PC-9 (cell line): ENCODE measurements at regions of chr10 and their contacts with region 1.

Region 1: DNA sequence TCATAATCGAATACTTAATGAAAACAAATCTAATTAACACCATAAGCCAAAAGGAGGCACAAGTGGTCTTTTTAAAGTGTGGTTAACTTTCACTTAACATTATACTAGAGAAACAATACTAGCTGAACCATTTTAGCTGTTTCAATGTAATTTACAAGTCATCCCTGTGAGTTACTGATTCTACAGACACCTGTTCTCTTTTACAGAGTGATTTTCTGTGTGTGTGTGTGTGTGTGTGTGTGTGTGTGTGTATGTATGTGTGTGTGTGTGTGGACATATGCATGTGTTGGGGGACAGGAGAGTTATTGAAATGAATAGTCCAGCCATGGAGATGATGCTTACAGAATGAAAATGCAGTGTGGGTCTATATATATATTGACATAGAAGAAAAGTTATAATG is 200.2 kb downstream of the DNAJC1 start:
- DNase-seq: no peak
- H3K4me3 ChIP-seq: no peak overlapping the region
- H3K27ac ChIP-seq: no peak overlapping the region
- H3K4me1 ChIP-seq: no peaks in the 10 kb centered on the region
- H3K27me3 ChIP-seq: no peaks in the 10 kb centered on the region
- CTCF ChIP-seq: no peak

Region 2: GRCh38 chr10:23205972-23206642 is 1402.7 kb after region 1 on chr10:
- CTCF ChIA-PET with region 1: no interaction called
- POLR2A ChIA-PET with region 1: interaction called, 11 read pairs
- intact Hi-C with region 1: no loop called
- DNase-seq: no peak
- H3K4me3 ChIP-seq: no peak overlapping the region
- H3K27ac ChIP-seq: no peak overlapping the region
- H3K4me1 ChIP-seq: no peaks in the 10 kb centered on the region
- H3K27me3 ChIP-seq: peaks cover 18% of the 10 kb centered on the region; the same call in 1 of the 2 replicates
- CTCF ChIP-seq: no peak